Transverse colon (tissue), 4 donors: ENCODE measurements at regions of chr15 and their contacts with region 1.

Region 1: GRCh38 chr15:83559310-83559966 is 94.5 kb upstream of the ADAMTSL3 start:
- DNase-seq: peak; percentile 30
- H3K4me3 ChIP-seq: no peak overlapping the region
- H3K27ac ChIP-seq: no peak overlapping the region
- H3K4me1 ChIP-seq: peaks cover 0 to 3% (median 0%) of the 10 kb centered on the region in 4 donors
- H3K27me3 ChIP-seq: peaks cover 2% of the 10 kb centered on the region
- CTCF ChIP-seq: peak; percentile 57 to 81 (median 70)
- EP300 ChIP-seq: no peak
- POLR2A ChIP-seq: no peak

Region 2: GRCh38 chr15:82129761-82130160 is 1429.7 kb before region 1 on chr15:
- in situ Hi-C with region 1: no loop called
- intact Hi-C with region 1: no loop called
- DNase-seq: no peak
- H3K4me3 ChIP-seq: no peak overlapping the region
- H3K27ac ChIP-seq: peak overlapping the region in 3 of 4 donors; percentile 8 to 22 (median 10)
- H3K4me1 ChIP-seq: peaks cover 0 to 10% (median 0%) of the 10 kb centered on the region in 4 donors
- H3K27me3 ChIP-seq: no peaks in the 10 kb centered on the region
- CTCF ChIP-seq: no peak
- EP300 ChIP-seq: no peak
- POLR2A ChIP-seq: no peak

Region 3: DNA sequence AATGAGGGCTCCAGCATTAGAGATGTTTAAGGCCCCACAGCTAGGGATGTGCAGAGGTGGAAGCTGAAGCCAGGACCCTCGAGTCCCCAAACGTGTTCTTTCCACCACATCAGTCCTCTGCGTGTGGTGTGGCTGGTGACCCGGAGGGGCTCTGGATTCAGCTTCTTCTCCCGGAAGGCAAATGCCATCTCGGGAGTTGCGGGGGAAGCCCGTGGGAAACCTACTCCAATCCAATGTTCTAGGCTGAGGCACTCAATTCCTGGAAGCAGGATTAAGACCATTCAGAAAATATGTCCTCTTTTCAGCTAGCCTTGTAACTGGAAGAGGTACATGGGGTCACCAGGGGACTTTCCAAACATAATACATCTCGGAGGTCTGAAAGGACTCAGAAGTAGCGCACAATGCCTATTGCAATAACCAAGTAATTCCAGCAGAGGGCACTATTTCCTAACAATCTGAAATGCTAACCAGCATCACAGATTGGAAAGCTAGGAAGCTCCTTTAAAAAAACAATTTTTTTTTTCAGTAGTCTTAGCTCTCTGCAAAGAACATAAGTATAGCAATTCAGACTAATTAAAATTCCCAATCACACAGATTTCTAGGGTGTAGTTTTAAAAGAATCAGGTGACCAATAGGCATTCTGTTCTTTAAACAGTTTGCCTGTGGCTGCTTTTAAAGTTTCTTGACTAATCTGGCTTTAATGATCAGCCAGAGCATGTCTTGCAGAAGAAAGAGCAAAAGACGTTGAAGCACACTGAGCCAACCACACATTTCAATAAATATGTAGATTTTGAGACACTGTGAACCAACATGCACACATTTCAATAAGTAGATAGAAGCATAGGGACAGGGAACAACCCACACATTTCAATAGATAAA is 311.0 kb before region 1 on chr15:
- in situ Hi-C with region 1: loop called in 3 of 4 experiments (anchors 10 to 25 kb)
- intact Hi-C with region 1: loop called (anchors 10 kb)
- DNase-seq: no peak
- H3K4me3 ChIP-seq: no peak overlapping the region
- H3K27ac ChIP-seq: no peak overlapping the region
- H3K4me1 ChIP-seq: no peaks in the 10 kb centered on the region
- H3K27me3 ChIP-seq: peaks cover 26% of the 10 kb centered on the region
- CTCF ChIP-seq: peak; percentile 76 to 98 (median 93)
- EP300 ChIP-seq: no peak
- POLR2A ChIP-seq: no peak

Region 4: DNA sequence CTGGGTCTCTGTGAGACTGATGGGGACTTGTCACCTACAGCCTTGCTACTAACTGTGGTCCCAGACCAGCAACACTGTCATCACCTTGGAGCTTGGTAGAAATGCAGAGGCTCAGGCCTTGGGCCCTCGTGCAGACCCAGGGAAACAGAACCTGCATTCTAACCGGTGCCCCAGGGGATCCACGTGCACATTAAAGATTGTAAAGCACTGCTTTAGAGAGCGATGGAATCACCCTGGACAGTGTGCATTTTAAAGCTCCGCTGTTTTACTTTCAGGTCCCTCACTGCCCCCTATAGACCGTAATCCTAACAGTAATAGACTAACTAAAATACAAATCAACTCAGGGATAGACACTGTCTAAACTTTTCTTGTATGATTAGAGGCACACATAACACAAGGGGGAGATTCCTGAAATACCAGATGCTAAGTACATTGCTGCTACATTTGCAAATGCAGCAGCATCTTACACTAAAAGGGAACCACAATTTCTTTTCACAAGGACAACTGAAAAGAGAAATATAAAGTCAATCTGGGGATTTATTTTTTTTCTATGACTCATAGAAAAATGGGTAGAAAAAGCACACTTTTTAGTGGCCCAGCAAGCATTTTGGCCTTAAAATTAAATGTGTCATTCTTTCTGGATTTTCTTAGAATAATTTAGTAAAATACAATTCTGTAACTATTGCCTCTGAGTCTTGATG is 122.8 kb before region 1 on chr15:
- in situ Hi-C with region 1: loop called in 1 of 4 experiments (anchors 10 kb)
- intact Hi-C with region 1: no loop called
- DNase-seq: no peak
- H3K4me3 ChIP-seq: no peak overlapping the region
- H3K27ac ChIP-seq: no peak overlapping the region
- H3K4me1 ChIP-seq: no peaks in the 10 kb centered on the region
- H3K27me3 ChIP-seq: no peaks in the 10 kb centered on the region
- CTCF ChIP-seq: peak in 2 of 5 experiments; percentile 16 to 20
- EP300 ChIP-seq: no peak
- POLR2A ChIP-seq: no peak

Region 5: GRCh38 chr15:83446904-83447709 is 112.3 kb before region 1 on chr15 and contains the start of gene SH3GL3:
- in situ Hi-C with region 1: no loop called
- intact Hi-C with region 1: loop called (anchors 2 kb)
- DNase-seq: peak; percentile 49
- H3K4me3 ChIP-seq: peak within 1 kb of the TSS; percentile 27 to 48 (median 37)
- H3K27ac ChIP-seq: peak within 1 kb of the TSS in 1 of 4 donors; percentile 22
- H3K4me1 ChIP-seq: peaks cover 0 to 6% (median 3%) of the 10 kb centered on the region in 4 donors
- H3K27me3 ChIP-seq: peaks cover 36% of the 10 kb centered on the region
- CTCF ChIP-seq: peak in 1 of 5 experiments; percentile 6
- EP300 ChIP-seq: no peak
- POLR2A ChIP-seq: no peak
- total RNA-seq, gene SH3GL3: not detected

Region 6: GRCh38 chr15:84035399-84035766 is 475.9 kb after region 1 on chr15:
- in situ Hi-C with region 1: loop called (anchors 10 to 25 kb)
- intact Hi-C with region 1: no loop called
- DNase-seq: no peak
- H3K4me3 ChIP-seq: no peak overlapping the region
- H3K27ac ChIP-seq: no peak overlapping the region
- H3K4me1 ChIP-seq: no peaks in the 10 kb centered on the region
- H3K27me3 ChIP-seq: no peaks in the 10 kb centered on the region
- CTCF ChIP-seq: peak in 4 of 5 experiments; percentile 18 to 42 (median 30)
- EP300 ChIP-seq: no peak
- POLR2A ChIP-seq: no peak